ENCODE measurements at regions of chr16 and their contacts with region 1.

Region 1: DNA sequence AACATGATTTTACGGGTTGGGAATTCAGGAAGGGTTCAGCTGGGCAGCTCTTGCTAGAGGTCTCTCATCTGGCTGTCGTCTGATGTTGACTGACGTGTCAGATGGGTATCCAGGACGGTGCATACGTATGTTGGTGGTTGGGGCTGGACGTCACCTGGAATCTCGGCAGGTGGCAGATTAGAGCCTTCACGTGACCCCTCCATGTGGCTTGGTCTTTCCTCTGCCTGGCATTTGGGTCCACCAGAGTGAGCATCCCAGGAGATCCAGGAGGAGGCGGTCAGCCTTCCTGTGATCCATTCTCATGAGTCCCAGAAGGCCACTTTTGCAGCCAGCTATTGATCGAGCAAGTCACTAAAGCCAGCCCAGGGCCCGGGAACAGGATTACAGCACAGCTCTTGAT is 202.7 kb downstream of the FOXL1 start:
- DNase-seq: no peak
- H3K4me3 ChIP-seq: no peak overlapping the region
- H3K27ac ChIP-seq: no peak overlapping the region
- H3K4me1 ChIP-seq: peaks cover 0 to 15% (median 11%) of the 10 kb centered on the region in 4 donors
- H3K27me3 ChIP-seq: no peaks in the 10 kb centered on the region
- CTCF ChIP-seq: no peak

Region 2: GRCh38 chr16:86387461-86388440 is 393.3 kb before region 1 on chr16:
- intact Hi-C with region 1: no loop called
- DNase-seq: no peak
- H3K4me3 ChIP-seq: no peak overlapping the region
- H3K27ac ChIP-seq: no peak overlapping the region
- H3K4me1 ChIP-seq: no peaks in the 10 kb centered on the region
- H3K27me3 ChIP-seq: peaks cover 0 to 75% of the 10 kb centered on the region in 2 donors
- CTCF ChIP-seq: no peak

Region 3: DNA sequence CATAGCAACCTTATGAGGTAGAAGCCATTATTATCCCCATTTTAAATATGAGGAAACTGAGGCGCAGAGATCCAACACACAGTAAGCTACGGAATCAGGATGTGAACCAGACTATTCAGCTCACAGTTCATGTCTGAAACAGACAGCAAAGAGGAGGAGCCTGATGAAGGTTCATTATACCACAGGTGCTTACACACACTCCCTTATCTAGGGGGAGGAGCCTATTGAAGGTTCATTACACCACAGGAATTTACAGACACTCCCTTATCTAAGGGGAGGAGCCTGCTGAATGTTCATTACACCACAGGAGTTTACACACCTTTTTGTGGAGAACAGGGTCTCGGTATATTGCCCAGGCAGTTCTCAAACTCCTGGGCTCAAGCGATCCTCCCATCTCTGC is 514.2 kb after region 1 on chr16:
- intact Hi-C with region 1: loop called (anchors 2 kb)
- DNase-seq: no peak
- H3K4me3 ChIP-seq: no peak overlapping the region
- H3K27ac ChIP-seq: no peak overlapping the region
- H3K4me1 ChIP-seq: no peaks in the 10 kb centered on the region
- H3K27me3 ChIP-seq: no peaks in the 10 kb centered on the region
- CTCF ChIP-seq: no peak

Measured in tibial artery (tissue), 4 donors.